ENCODE measurements at regions of chr20 and their contacts with region 1.

Region 1: GRCh38 chr20:19995220-19995863 is 21.8 kb upstream of the NAA20 start:
- DNase-seq: no peak
- H3K4me3 ChIP-seq: no peak overlapping the region
- H3K27ac ChIP-seq: peak overlapping the region; percentile 83
- H3K4me1 ChIP-seq: peaks cover 99% of the 10 kb centered on the region
- H3K27me3 ChIP-seq: no peaks in the 10 kb centered on the region
- CTCF ChIP-seq: peak; percentile 83

Region 2: GRCh38 chr20:19692685-19693119 is 302.6 kb before region 1 on chr20:
- intact Hi-C with region 1: loop called (anchors 5 kb)
- DNase-seq: peak; percentile 63
- H3K4me3 ChIP-seq: no peak overlapping the region
- H3K27ac ChIP-seq: no peak overlapping the region
- H3K4me1 ChIP-seq: peaks cover 48% of the 10 kb centered on the region
- H3K27me3 ChIP-seq: no peaks in the 10 kb centered on the region
- CTCF ChIP-seq: peak; percentile 94

Region 3: GRCh38 chr20:19784511-19785172 is 210.7 kb before region 1 on chr20:
- intact Hi-C with region 1: loop called (anchors 10 kb)
- DNase-seq: peak; percentile 53
- H3K4me3 ChIP-seq: peak overlapping the region; percentile 23
- H3K27ac ChIP-seq: peak overlapping the region; percentile 90
- H3K4me1 ChIP-seq: peaks cover 76% of the 10 kb centered on the region
- H3K27me3 ChIP-seq: no peaks in the 10 kb centered on the region
- CTCF ChIP-seq: peak; percentile 85

Region 4: GRCh38 chr20:19934792-19935491 is 60.4 kb before region 1 on chr20:
- intact Hi-C with region 1: no loop called
- DNase-seq: peak; percentile 58
- H3K4me3 ChIP-seq: peak overlapping the region; percentile 52
- H3K27ac ChIP-seq: peak overlapping the region; percentile 78
- H3K4me1 ChIP-seq: peaks cover 100% of the 10 kb centered on the region
- H3K27me3 ChIP-seq: no peaks in the 10 kb centered on the region
- CTCF ChIP-seq: no peak

Region 5: DNA sequence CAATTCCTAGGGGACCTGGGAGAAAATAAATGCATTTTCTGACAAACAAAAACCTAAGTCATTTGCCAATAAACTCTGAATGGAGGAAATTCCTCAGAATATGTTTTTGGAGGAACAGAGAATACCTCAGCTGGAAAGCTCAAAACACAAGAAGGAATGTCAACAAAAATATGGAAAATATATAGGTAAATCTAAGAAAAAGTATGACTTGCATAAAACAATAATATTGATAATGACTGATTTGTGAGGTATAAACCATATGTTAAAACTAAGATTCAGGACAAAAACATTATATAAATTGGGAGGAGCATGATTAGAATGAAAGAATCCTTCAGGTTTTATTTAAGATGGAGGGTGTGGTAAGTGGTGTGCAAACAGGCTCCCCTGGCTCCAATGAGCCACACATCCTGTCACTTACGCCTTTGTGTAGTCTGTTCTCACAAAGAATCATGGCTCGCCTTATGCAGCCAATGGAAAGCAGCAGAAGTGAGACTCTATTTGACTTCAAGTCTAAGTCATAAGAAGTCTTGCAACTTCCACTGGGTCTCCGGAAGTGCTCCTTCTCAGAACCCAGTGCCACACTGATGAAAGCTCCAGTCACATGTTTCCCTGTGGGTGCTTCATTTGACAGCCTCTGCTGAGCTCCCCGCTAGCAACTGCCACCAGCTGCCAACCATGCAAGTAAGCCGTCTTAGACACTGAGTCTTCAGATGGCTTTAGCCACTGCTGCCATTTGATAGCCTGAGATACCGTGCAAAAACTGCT is 65.1 kb after region 1 on chr20:
- intact Hi-C with region 1: no loop called
- DNase-seq: no peak
- H3K4me3 ChIP-seq: no peak overlapping the region
- H3K27ac ChIP-seq: no peak overlapping the region
- H3K4me1 ChIP-seq: no peaks in the 10 kb centered on the region
- H3K27me3 ChIP-seq: peaks cover 3% of the 10 kb centered on the region
- CTCF ChIP-seq: no peak

Region 6: DNA sequence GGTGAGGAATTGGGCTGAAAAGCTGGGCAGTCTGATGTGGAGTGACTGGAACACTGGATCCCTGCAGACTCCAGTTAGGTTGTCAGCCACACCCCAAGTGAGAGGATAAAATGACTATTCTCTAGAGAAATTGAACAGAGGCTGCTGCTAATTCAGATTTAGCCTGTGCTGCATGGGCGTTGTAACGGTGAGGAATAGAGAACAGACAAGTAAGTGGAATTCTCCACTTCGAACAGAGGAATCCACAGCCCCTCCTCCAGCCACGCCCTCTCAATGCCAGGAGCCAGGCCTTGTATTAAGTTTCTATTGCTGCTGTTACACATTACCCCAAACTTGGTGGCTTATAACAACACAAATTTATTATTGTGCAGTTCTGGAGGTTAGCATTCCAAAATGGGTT is 166.3 kb after region 1 on chr20:
- intact Hi-C with region 1: no loop called
- DNase-seq: no peak
- H3K4me3 ChIP-seq: no peak overlapping the region
- H3K27ac ChIP-seq: no peak overlapping the region
- H3K4me1 ChIP-seq: no peaks in the 10 kb centered on the region
- H3K27me3 ChIP-seq: no peaks in the 10 kb centered on the region
- CTCF ChIP-seq: no peak

Measured in left ventricle myocardium inferior (tissue), 1 donor.